Motor neuron (in vitro differentiated cells): ENCODE measurements at regions of chr3 and their contacts with region 1.

Region 1: DNA sequence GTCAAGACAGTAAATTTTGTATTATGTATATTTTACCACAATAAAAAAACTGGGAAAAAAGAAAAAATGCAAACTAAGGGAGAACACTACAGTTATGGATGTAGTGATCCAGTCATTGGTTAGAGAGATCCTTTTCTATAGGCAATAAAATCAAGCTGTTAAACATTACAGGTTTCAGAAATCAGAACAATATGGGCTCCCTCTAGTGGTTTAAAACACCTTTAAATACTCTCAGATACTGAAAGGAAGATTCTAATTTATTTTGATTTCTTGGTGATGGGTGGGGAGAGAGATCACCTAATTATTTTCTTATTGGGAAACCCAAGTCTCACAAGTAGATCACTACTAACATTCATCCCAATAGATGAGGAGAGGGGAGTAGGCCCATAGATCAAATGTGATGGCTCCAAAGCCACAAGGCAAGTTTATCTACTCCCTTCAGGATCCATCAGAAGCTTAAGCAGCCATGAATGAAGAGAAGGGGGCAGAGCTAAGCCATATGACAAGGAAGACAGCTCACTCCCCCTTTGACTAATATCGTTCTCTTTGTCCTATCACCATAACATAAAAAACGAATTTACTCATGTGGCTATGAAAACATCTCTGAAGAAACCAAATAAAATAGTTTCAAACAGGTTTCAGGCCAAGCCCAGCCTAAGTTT is 118.6 kb downstream of the ANO10 start:
- ATAC-seq: peak in 6 of 8 experiments; percentile 25 to 78 (median 54)
- H3K4me3 ChIP-seq: no peak overlapping the region
- H3K27ac ChIP-seq: no peak overlapping the region
- H3K4me1 ChIP-seq: no peaks in the 10 kb centered on the region

Region 2: GRCh38 chr3:43246976-43247375 is 256.2 kb before region 1 on chr3:
- in situ Hi-C with region 1: loop called in 1 of 9 experiments (anchors 25 kb)
- ATAC-seq: no peak
- H3K4me3 ChIP-seq: no peak overlapping the region
- H3K27ac ChIP-seq: no peak overlapping the region
- H3K4me1 ChIP-seq: no peaks in the 10 kb centered on the region

Region 3: DNA sequence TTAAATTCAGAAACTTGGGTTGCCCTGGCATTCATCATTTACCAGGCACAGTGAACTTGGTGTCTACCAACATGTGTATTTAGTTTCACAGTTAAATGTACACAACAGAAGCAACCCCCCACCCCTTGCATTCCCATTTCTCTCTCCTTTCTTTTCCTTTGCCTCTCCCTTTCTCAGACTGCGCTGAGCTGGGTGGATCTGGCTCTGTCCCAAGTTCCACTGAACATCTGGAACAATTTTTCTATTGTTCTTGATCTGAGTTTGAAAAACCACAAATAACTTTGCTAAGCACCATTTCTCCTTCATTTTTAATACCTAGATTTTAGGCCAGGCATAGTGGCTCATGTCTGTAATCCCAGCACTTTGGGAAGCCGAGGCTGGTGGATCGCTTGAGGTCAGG is 429.7 kb after region 1 on chr3:
- in situ Hi-C with region 1: no loop called
- ATAC-seq: peak in 2 of 8 experiments; percentile 20 to 55
- H3K4me3 ChIP-seq: no peak overlapping the region
- H3K27ac ChIP-seq: no peak overlapping the region
- H3K4me1 ChIP-seq: no peaks in the 10 kb centered on the region